ENCODE measurements at regions of chr1 and their contacts with region 1.

Region 1: GRCh38 chr1:148334339-148335130 is 148.6 kb downstream of the PPIAL4G start:
- DNase-seq: peak; percentile 56 to 77 (median 75)
- H3K4me3 ChIP-seq: peak overlapping the region; percentile 72 to 83
- H3K4me3 Mint-ChIP-seq: peak overlapping the region; percentile 90 to 99 (median 98)
- H3K27ac ChIP-seq: peak overlapping the region; percentile 64
- H3K27ac Mint-ChIP-seq: peak overlapping the region; percentile 90 to 99 (median 99)
- H3K4me1 ChIP-seq: peaks cover 17% of the 10 kb centered on the region
- H3K4me1 Mint-ChIP-seq: peaks cover 20 to 36% (median 31%) of the 10 kb centered on the region in 4 donors
- H3K27me3 ChIP-seq: no peaks in the 10 kb centered on the region
- H3K27me3 Mint-ChIP-seq: peaks cover 5 to 8% of the 10 kb centered on the region in 2 donors

Region 2: GRCh38 chr1:147919896-147920295 is 414.6 kb before region 1 on chr1:
- CTCF ChIA-PET with region 1: no interaction called
- POLR2A ChIA-PET with region 1: no interaction called
- intact Hi-C with region 1: no loop called
- DNase-seq: no peak
- H3K4me3 ChIP-seq: no peak overlapping the region
- H3K4me3 Mint-ChIP-seq: no peak overlapping the region
- H3K27ac ChIP-seq: no peak overlapping the region
- H3K27ac Mint-ChIP-seq: no peak overlapping the region
- H3K4me1 ChIP-seq: no peaks in the 10 kb centered on the region
- H3K4me1 Mint-ChIP-seq: no peaks in the 10 kb centered on the region
- H3K27me3 ChIP-seq: no peaks in the 10 kb centered on the region
- H3K27me3 Mint-ChIP-seq: peaks cover 6 to 11% of the 10 kb centered on the region in 2 donors

Region 3: GRCh38 chr1:148158341-148159003 is 176.1 kb before region 1 on chr1:
- CTCF ChIA-PET with region 1: no interaction called
- POLR2A ChIA-PET with region 1: no interaction called
- intact Hi-C with region 1: loop called (anchors 10 kb)
- DNase-seq: no peak
- H3K4me3 ChIP-seq: no peak overlapping the region
- H3K4me3 Mint-ChIP-seq: peak overlapping the region in 3 of 8 donors; percentile 7 to 60 (median 46)
- H3K27ac ChIP-seq: no peak overlapping the region
- H3K27ac Mint-ChIP-seq: no peak overlapping the region
- H3K4me1 ChIP-seq: no peaks in the 10 kb centered on the region
- H3K4me1 Mint-ChIP-seq: peaks cover 0 to 16% (median 7%) of the 10 kb centered on the region in 4 donors
- H3K27me3 ChIP-seq: no peaks in the 10 kb centered on the region
- H3K27me3 Mint-ChIP-seq: peaks cover 13 to 17% of the 10 kb centered on the region in 2 donors

Region 4: DNA sequence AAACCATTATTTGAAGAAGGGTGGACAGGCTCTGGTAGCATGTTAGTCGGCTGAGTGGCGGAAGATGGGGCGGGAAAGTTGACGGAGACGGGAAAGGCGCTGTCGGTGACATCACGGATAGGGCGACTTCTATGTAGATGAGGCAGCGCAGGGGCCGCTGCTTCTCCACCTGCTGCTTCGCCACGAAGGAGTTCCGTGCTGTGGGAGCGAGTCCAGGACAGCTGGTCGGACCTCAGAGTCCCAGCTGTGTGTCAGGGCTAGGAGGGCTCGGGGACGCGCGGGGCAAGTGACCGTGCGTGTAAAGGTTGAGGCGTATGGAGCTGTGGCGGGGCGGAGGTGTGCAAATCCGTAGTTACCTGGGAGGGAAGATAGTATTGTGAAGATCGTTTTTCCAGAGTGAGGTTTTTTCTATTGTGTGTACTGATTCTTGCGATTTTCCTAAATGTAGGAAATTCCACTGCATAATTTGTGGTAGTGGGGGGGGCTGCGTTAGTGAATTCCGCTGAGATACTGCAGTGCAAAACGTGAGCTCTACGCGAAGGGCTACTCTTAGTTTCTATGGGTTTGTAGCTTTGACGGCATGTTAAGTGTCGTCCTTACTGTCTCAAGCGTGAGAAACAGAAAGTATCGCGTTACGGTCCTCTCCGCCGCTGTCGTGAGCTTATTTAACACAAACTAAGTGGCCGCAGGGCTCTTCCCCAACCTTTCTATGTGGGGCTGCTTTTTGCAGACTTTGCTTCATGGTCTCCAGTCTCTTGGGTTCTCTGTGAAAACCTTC is 71.2 kb before region 1 on chr1:
- CTCF ChIA-PET with region 1: no interaction called
- POLR2A ChIA-PET with region 1: interaction called, 23 read pairs
- intact Hi-C with region 1: loop called (anchors 5 kb)
- DNase-seq: peak; percentile 51 to 66 (median 59)
- H3K4me3 ChIP-seq: peak overlapping the region; percentile 39 to 89
- H3K4me3 Mint-ChIP-seq: peak overlapping the region; percentile 93 to 97 (median 96)
- H3K27ac ChIP-seq: peak overlapping the region; percentile 62
- H3K27ac Mint-ChIP-seq: peak overlapping the region; percentile 81 to 98 (median 97)
- H3K4me1 ChIP-seq: peaks cover 6% of the 10 kb centered on the region
- H3K4me1 Mint-ChIP-seq: peaks cover 3 to 16% (median 4%) of the 10 kb centered on the region in 4 donors
- H3K27me3 ChIP-seq: no peaks in the 10 kb centered on the region
- H3K27me3 Mint-ChIP-seq: no peaks in the 10 kb centered on the region

Region 5: GRCh38 chr1:148318123-148318903 is 16.2 kb before region 1 on chr1:
- CTCF ChIA-PET with region 1: interaction called, 3 read pairs
- POLR2A ChIA-PET with region 1: interaction called, 20 read pairs
- intact Hi-C with region 1: no loop called
- DNase-seq: peak; percentile 55 to 72 (median 56)
- H3K4me3 ChIP-seq: peak overlapping the region; percentile 49 to 67
- H3K4me3 Mint-ChIP-seq: peak overlapping the region; percentile 75 to 99 (median 93)
- H3K27ac ChIP-seq: no peak overlapping the region
- H3K27ac Mint-ChIP-seq: peak overlapping the region in 6 of 7 donors; percentile 13 to 84 (median 62)
- H3K4me1 ChIP-seq: peaks cover 15% of the 10 kb centered on the region
- H3K4me1 Mint-ChIP-seq: peaks cover 12 to 19% (median 16%) of the 10 kb centered on the region in 4 donors
- H3K27me3 ChIP-seq: no peaks in the 10 kb centered on the region
- H3K27me3 Mint-ChIP-seq: peaks cover 2 to 7% of the 10 kb centered on the region in 2 donors

Region 6: DNA sequence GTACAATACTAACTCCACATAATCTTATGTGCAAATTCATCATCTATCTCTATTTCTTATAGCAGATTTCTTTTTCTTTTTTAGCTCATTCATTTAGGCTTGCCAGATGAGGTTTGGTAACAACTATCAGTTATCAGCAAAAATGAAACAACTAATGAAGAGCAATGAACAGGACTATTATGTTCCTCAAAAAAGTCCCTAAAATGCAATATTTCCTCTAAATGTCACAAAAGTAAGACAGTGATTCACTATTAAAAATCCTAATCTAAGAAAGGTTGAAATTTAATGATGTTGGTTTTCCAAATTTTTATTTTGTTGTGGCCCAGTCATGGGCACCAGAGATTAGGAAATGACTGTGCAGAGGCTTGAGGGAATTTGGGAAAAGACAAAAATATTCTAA is 13.2 kb after region 1 on chr1:
- CTCF ChIA-PET with region 1: interaction called, 12 read pairs
- POLR2A ChIA-PET with region 1: interaction called, 8 read pairs
- intact Hi-C with region 1: no loop called
- DNase-seq: no peak
- H3K4me3 ChIP-seq: no peak overlapping the region
- H3K4me3 Mint-ChIP-seq: no peak overlapping the region
- H3K27ac ChIP-seq: no peak overlapping the region
- H3K27ac Mint-ChIP-seq: no peak overlapping the region
- H3K4me1 ChIP-seq: no peaks in the 10 kb centered on the region
- H3K4me1 Mint-ChIP-seq: no peaks in the 10 kb centered on the region
- H3K27me3 ChIP-seq: no peaks in the 10 kb centered on the region
- H3K27me3 Mint-ChIP-seq: peaks cover 41 to 53% of the 10 kb centered on the region in 2 donors

Measured in CD4-positive, alpha-beta memory T cell (primary cell).